Activated CD4-positive, alpha-beta T cell treated with anti-CD3 and anti-CD28 coated beads for 36 hours (primary cell): ENCODE measurements at regions of chr14 and their contacts with region 1.

Region 1: GRCh38 chr14:100454437-100454836 is 131.3 kb downstream of the SLC25A47 start:
- DNase-seq: no peak
- ATAC-seq: no peak
- H3K4me3 Mint-ChIP-seq: no peak overlapping the region
- H3K27ac Mint-ChIP-seq: no peak overlapping the region
- H3K4me1 Mint-ChIP-seq: no peaks in the 10 kb centered on the region
- H3K27me3 Mint-ChIP-seq: no peaks in the 10 kb centered on the region

Region 2: DNA sequence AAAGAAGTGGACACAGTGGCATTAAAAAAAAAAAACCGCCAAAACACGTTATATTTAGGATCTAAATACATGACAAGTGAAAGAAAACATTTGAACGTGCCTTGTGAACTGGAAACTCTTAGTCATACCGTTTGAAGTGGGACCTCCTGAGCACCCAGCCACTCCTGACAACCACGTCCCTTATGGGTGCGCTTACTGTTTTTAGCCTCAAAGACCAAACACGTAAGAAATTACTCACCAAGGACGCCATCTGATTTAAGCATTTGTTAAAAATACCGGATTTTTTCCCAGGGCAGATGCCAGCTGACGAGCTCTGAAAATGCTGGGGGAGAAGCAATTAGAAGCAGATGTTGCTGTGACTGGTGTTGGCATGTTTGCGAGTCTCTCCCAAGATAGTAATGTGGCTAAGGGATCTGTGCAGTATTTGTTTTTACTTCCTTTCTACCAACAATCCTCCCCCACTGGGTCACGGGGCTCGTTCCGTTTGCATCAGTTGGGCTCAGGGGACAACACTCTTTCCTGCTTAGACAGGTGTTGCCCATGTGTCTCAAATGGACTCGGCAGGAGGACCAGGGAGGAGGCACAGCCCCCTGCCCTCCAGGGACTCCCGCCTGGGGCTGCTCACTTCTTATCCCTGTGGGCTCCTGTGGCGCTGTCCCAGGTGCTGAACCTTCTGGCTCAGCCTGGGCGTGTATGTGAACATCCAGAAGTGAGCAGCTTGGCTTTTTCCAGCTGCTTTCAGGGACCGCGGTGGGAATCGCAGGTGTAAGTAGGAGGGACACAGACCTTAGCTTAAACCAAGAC is 31.8 kb after region 1 on chr14:
- CTCF ChIA-PET with region 1: no interaction called
- POLR2A ChIA-PET with region 1: no interaction called
- intact Hi-C with region 1: loop called in 1 of 2 experiments (anchors 2 kb)
- DNase-seq: peak; percentile 82
- ATAC-seq: peak; percentile 69
- H3K4me3 Mint-ChIP-seq: no peak overlapping the region
- H3K27ac Mint-ChIP-seq: no peak overlapping the region
- H3K4me1 Mint-ChIP-seq: peaks cover 21% of the 10 kb centered on the region
- H3K27me3 Mint-ChIP-seq: no peaks in the 10 kb centered on the region